Mucosa of descending colon (tissue), 3 donors: ENCODE measurements at regions of chr17 and their contacts with region 1.

Region 1: DNA sequence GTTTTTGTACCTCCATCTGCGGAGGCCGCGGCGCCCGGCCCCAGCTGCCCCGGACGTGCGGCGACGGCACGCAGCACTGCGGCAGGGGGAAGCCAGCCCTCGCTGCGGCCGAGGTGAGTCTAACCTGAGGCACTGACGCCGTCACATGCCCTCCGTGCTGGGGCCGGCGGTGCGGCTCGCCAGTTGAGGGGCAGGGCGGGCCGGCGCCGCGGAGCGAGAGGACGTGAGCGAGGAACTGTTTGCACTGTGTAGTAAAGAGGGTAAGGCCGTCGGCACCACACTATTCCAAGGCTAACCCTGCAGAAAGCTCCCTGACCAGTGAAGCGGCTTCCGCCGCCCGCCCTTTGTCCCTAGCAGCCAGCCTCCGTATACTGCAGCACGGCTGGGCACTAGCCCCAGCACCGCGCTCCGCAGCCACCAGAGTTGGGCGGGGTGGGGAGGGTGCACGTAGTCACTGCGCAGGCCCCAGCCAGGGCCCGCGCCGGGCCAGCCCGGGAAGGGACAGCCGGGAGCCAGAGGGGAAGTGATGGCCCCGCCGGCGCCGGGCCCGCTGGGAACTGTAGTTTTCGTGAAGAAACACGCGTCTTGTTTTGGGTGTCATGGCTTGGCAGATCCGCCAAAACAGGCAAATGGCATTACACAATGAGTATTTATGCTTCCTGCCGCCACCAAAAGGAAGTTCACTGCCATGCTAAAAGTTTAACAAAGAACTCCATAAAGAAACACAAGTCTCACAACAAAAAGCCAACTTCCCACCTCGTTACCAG is 580 bp upstream of the KANSL1 start:
- DNase-seq: peak; percentile 96 to 99 (median 96)
- ATAC-seq: peak; percentile 89
- H3K4me3 ChIP-seq: peak overlapping the region; percentile 94
- H3K4me1 ChIP-seq: peaks cover 12% of the 10 kb centered on the region
- CTCF ChIP-seq: no peak

Region 2: DNA sequence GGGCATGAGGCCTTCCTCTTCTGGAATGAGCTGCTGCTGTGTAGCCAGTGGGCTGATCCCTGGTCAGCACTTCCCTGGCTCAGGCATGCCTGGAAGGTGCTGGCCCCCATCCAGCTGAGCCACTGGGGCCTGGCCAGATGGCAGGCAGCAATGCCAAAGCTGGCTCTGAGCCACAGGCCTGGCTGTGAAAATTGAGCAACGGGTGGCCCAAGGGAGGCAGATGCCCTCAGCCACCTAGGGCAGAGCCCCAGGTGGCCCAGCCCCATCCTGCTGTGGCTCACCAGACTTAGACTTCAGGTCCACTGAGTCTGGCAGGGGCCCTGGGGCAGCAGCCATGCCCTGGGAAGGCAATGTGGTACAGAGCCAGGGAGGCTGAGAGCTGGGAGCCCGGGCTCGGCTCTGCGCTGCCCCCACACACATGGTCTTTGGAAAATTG is 418.2 kb before region 1 on chr17:
- intact Hi-C with region 1: no loop called
- DNase-seq: peak in 2 of 3 donors; percentile 10 to 53
- ATAC-seq: peak; percentile 48
- H3K4me3 ChIP-seq: no peak overlapping the region
- H3K4me1 ChIP-seq: no peaks in the 10 kb centered on the region
- CTCF ChIP-seq: no peak

Region 3: GRCh38 chr17:45976755-45977505 is 216.9 kb before region 1 on chr17:
- intact Hi-C with region 1: no loop called
- DNase-seq: no peak
- ATAC-seq: no peak
- H3K4me3 ChIP-seq: no peak overlapping the region
- H3K4me1 ChIP-seq: no peaks in the 10 kb centered on the region
- CTCF ChIP-seq: no peak

Region 4: DNA sequence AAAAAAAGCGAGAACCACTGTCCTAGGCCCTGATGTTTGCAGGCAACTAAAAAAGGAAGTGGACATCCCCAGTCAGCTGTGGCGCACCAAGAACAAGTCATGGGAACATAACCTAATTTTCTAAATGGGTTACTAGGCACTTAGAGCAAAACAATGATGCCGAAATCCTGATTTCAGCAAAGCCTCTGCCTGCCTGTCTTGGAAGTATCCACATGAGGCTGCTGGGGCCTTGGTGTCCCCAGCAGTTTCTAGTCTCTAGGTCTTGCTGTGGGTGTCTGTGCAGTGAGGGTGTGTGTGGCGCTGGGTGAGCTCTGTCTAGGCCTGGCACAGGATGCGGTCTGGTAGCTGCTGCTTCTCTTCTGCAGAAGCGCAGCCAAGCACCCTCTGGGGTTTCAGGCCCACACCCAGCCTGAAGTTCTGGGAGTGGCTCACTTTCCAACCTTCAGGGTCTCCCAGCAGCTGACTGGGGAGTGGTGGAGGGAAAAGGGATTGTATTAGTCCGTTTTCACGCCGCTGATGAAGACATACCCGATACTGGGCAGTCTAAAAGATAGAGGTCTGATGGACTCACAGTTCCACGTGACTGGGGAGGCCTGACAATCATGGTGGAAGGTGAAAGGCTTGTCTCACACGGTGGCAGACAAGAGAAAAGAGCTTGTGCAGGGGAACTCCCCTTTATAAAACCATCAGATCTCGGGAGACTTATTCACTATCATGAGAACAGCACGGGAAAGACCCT is 173.6 kb before region 1 on chr17:
- intact Hi-C with region 1: no loop called
- DNase-seq: peak in 1 of 3 donors; percentile 73
- ATAC-seq: peak; percentile 86
- H3K4me3 ChIP-seq: no peak overlapping the region
- H3K4me1 ChIP-seq: no peaks in the 10 kb centered on the region
- CTCF ChIP-seq: no peak

Region 5: DNA sequence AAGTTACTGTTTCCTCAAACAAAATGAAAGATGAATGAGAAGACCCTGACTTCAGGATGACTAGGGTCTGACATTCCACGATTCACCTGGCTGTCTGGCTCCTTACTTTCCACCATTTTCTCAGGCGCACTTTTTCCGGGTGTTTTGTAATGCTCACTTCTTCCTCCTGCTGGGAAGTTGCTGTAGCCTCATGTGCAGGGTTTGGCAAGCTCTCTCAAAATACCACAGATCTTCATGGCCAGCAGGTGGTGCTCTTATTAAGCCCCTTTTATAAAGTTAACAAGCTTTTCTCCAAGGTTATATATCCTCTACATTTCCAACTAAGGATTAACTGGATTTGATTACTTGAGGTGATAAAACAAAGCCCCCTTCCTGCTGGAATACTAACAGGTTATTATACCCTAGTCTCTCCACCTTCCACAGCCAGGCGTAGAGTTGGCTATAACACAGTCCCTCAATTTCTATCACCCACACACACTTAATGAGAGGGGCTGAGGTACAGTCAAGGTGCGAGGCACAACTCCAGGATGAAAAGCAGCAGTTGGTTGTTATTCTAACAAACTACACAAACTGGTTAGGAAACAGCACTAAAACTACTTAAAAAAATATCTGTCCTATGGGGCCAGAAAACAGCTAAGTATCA is 149.4 kb before region 1 on chr17:
- intact Hi-C with region 1: loop called in 1 of 2 experiments (anchors 10 kb)
- DNase-seq: peak in 2 of 3 donors; percentile 49 to 95
- ATAC-seq: peak; percentile 89
- H3K4me3 ChIP-seq: no peak overlapping the region
- H3K4me1 ChIP-seq: peaks cover 28% of the 10 kb centered on the region
- CTCF ChIP-seq: peak; percentile 40

Region 6: GRCh38 chr17:46266656-46267544 is 73.1 kb after region 1 on chr17:
- intact Hi-C with region 1: no loop called
- DNase-seq: peak; percentile 83 to 92 (median 91)
- ATAC-seq: peak; percentile 93
- H3K4me3 ChIP-seq: peak overlapping the region; percentile 33
- H3K4me1 ChIP-seq: no peaks in the 10 kb centered on the region
- CTCF ChIP-seq: no peak